ENCODE measurements at regions of chr17 and their contacts with region 1.

Region 1: DNA sequence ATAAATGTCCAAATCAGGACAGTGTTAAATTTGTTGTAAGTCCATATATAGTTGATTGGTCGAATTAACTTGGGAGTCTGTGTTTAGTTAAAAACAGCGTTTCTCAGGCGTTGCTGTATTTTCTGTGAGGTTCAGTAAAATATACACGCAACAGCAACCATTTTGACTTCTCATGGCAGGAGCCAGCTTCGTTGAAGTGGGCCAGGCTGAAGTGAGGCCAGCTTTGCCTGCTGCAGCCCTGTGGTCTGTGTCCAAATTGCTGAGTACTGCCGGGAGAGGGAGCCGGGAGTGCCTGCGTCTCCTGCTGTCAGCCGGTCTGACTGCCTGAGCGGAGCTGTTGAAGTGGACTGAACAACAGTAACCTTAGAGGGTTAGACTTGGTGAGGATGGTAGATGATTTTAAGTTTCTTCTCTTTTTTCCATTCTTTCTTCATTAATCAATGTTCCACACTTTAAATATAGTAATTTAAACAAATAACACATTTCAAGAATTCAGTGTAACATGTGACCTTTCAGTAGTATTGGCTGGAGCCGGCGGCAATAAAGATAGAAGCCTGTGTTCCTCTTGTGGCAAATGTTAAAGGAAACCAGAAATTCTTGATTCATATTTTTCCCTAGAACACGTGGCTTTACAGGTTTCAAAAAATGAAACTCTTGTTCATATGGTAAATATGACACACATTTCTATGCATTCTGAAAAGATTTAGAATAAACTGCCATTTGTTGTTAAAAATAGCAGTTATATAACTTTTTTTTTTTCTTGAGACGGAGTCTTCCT is 37.0 kb upstream of the ZNF750 start:
- DNase-seq: peak in 4 of 5 donors; percentile 81 to 91 (median 86)
- ATAC-seq: peak; percentile 92 to 96 (median 94)
- H3K4me3 ChIP-seq: no peak overlapping the region
- H3K27ac ChIP-seq: peak overlapping the region in 11 of 12 donors; percentile 36 to 78 (median 70)
- H3K4me1 ChIP-seq: peaks cover 3 to 77% (median 37%) of the 10 kb centered on the region in 12 donors
- H3K27me3 ChIP-seq: no peaks in the 10 kb centered on the region
- CTCF ChIP-seq: peak; percentile 30 to 76 (median 48)
- POLR2A ChIP-seq: no peak

Region 2: DNA sequence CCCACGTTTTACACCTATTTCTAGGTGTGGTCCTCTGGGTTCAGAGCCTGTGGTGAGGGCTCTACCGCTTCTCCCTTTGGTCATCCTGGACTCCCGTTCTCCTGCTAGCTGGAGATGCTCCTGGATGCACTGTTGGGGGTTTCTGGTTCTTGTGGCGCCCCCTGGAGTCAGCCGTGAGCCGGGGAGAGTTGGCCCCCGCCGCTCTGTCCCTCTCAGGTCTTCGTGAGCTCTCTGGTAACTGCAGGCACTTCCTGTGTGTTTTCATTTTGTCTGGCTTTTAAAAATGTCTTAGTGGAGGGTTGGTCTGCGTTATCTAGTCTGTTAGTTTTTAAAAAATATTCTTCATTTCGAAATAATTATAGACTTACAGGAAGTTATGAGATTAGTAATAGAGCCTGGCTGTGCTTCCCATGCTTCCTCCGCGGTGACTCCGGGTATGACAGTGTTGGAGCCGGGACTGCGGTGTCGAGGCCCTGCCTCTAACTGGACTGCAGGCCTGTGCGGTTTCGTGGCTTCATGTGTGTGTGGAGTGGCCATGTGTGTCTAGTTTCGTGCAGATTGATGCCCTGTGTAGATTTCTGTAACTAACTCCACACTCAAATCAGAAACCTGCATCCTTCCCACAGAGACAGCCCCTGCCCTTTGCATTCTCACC is 41.0 kb after region 1 on chr17:
- intact Hi-C with region 1: loop called in 2 of 10 experiments (anchors 5 kb)
- DNase-seq: peak in 1 of 5 donors; percentile 26
- ATAC-seq: peak in 1 of 4 donors; percentile 31
- H3K4me3 ChIP-seq: no peak overlapping the region
- H3K27ac ChIP-seq: no peak overlapping the region
- H3K4me1 ChIP-seq: peaks cover 0 to 15% (median 4%) of the 10 kb centered on the region in 12 donors
- H3K27me3 ChIP-seq: no peaks in the 10 kb centered on the region
- CTCF ChIP-seq: peak in 10 of 12 donors; percentile 11 to 57 (median 46)
- POLR2A ChIP-seq: no peak

Region 3: GRCh38 chr17:83012868-83013778 is 136.3 kb after region 1 on chr17:
- intact Hi-C with region 1: no loop called
- DNase-seq: no peak
- ATAC-seq: peak in 1 of 4 donors; percentile 24
- H3K4me3 ChIP-seq: no peak overlapping the region
- H3K27ac ChIP-seq: no peak overlapping the region
- H3K4me1 ChIP-seq: no peaks in the 10 kb centered on the region
- H3K27me3 ChIP-seq: no peaks in the 10 kb centered on the region
- CTCF ChIP-seq: no peak
- POLR2A ChIP-seq: no peak

Region 4: DNA sequence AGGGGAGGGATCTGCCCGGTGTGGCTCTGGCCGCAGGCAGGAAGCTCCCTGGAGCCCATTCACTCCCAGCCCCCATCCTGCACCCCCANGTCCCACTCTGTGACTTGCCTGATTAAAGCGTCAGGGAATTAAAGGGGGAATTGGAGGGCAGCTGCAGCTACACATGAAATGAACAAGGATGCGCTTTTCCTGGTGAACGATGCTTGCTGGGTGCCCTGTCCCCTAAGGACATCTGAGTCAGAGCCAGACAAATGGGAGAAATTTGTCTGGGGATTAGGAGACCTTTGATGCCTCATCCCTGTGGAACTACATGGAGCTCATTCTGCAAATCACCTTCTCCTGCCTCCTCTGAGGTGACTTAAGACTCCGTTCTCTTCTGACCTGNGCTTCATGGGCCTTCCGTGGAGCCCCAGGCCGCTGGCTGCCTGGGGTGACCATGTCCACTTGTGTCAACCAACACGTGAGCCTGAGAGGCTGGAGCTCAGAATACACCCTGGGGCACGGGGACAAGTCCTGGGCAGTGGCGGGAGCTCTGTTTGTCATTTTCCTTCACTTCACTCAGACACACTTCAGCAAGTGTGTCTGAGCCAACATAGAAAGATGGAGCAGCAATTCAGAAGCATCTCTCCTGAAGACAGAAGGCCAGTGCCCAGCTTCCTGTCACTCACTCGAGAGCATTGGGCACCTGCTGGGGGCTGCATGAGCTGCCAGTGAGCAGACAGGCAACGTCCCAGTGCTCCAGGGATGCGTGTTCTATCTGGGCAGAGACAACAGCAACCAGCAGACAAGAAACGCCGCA is 256.7 kb after region 1 on chr17:
- intact Hi-C with region 1: no loop called
- DNase-seq: peak in 2 of 5 donors; percentile 2 to 16
- ATAC-seq: peak in 2 of 4 donors; percentile 38 to 40
- H3K4me3 ChIP-seq: no peak overlapping the region
- H3K27ac ChIP-seq: no peak overlapping the region
- H3K4me1 ChIP-seq: peaks cover 0 to 17% (median 0%) of the 10 kb centered on the region in 12 donors
- H3K27me3 ChIP-seq: peaks cover 0 to 10% (median 0%) of the 10 kb centered on the region in 9 donors
- CTCF ChIP-seq: no peak
- POLR2A ChIP-seq: no peak

Measured in heart left ventricle (tissue), 16 donors.